Calu3 (cell line): ENCODE measurements at regions of chr18 and their contacts with region 1.

Region 1: GRCh38 chr18:6521795-6522418 is 107.2 kb upstream of the L3MBTL4 start:
- DNase-seq: peak; percentile 66
- H3K4me3 Mint-ChIP-seq: no peak overlapping the region
- H3K27ac Mint-ChIP-seq: no peak overlapping the region
- H3K4me1 Mint-ChIP-seq: no peaks in the 10 kb centered on the region
- H3K27me3 Mint-ChIP-seq: peaks cover 31% of the 10 kb centered on the region
- CTCF ChIP-seq: peak; percentile 86

Region 2: DNA sequence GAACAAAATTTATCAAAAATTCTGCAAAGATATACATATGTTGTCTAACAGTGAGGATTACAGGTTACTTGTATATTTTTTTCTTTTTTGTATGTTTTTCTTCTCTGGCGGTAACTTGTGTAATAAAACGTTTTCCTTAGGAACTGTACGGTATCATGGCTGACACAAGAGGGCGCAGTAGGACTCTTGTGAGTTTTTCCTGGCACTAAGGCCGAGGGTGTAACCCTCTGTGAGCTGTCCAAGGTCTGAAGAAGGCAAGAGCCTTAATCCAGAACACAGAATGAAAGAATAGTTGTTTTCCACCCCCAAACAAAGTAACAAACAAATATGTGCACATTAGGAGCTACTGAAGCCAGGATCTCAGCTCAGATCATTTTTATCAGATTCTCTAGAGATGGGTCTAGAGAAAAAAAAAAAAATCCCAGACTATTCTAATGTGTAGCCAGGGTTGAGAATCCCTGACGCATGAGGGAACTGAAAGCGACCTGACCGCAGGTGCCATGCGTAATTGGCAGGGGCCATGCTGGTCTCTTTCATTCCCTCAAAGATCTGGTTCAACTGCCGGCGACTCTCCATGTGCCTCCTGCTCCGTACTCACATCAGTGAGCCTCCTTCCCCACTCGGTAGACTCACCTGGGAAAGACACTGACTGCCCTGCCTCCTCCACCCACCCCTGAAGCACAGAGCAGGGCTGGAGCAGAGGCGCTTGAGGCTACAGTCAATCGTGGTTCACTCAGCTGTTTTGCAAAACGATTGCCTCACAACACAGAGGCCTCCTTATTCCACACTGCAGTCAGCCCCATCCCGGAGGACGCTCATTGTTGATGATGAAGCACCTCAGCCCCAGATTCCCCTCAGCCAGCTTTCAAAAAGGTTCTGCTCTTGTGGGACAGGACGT is 653.4 kb before region 1 on chr18:
- CTCF ChIA-PET with region 1: interaction called, 7 read pairs
- intact Hi-C with region 1: loop called (anchors 1 kb)
- DNase-seq: peak; percentile 61
- H3K4me3 Mint-ChIP-seq: no peak overlapping the region
- H3K27ac Mint-ChIP-seq: no peak overlapping the region
- H3K4me1 Mint-ChIP-seq: no peaks in the 10 kb centered on the region
- H3K27me3 Mint-ChIP-seq: peaks cover 17% of the 10 kb centered on the region
- CTCF ChIP-seq: peak; percentile 46

Region 3: DNA sequence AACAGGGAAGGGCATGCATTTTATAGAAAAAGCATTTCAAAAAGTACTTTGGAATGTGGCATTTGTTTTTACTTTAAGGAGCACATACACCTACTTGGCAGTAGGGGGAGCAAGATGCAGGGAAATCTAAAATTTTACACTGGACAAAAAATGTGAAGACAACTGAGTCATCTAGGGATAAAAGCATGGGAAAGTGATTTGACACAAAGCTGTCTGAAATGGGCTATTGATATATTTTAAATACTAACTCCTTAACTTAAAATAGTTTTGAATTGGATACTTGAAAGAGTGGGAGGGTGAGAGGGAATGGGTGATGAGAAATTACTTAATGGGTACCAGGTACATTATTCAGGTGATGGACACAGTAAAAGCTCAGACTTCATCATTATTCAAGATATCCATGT is 642.4 kb before region 1 on chr18:
- CTCF ChIA-PET with region 1: no interaction called
- intact Hi-C with region 1: loop called (anchors 1 kb)
- DNase-seq: no peak
- H3K4me3 Mint-ChIP-seq: no peak overlapping the region
- H3K27ac Mint-ChIP-seq: no peak overlapping the region
- H3K4me1 Mint-ChIP-seq: no peaks in the 10 kb centered on the region
- H3K27me3 Mint-ChIP-seq: peaks cover 18% of the 10 kb centered on the region
- CTCF ChIP-seq: peak; percentile 68

Region 4: DNA sequence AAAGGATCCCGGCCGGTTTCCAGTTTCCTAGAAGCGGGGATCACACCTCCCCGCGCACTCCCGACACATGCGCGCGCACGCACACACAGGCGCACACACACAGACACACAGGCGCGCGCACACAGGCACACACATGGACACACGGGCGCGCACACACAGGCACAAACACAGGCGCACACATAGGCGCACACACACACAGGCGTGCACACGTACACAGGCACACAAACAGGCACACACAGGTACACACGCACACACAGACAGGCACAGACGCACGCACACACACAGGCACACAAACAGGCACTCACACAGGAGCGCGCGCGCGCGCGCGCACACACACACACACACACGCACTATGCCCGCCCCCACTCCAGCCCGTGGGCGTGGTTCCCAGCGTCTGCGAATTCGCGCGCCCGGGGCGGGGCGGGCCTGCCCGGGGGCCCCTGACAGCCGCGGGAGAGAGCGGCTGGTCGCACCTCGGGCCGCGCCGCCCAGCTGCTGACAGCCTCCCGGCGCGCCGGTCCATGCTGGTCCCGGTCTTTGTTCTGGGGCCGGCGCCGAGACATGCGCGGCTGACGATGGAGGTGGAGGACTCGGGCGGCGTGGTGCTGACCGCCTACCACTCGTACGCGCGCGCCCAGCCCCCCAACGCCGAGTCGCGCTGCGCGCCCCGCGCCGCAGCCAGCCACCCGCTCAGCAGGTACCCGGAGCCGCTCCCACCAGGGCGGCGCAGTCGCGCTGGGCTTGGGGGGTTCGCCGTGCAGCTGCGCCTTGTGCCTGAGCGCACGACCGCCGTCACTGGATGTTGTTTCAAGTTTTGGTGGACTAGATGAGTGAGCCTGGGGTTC is 207.6 kb after region 1 on chr18 and contains the start of gene ARHGAP28:
- CTCF ChIA-PET with region 1: no interaction called
- intact Hi-C with region 1: no loop called
- DNase-seq: peak; percentile 54
- H3K4me3 Mint-ChIP-seq: peak within 1 kb of the TSS; percentile 80
- H3K27ac Mint-ChIP-seq: no peak within 1 kb of the TSS
- H3K4me1 Mint-ChIP-seq: peaks cover 7% of the 10 kb centered on the region
- H3K27me3 Mint-ChIP-seq: peaks cover 63% of the 10 kb centered on the region
- CTCF ChIP-seq: no peak
- total RNA-seq, gene ARHGAP28: not detected in 2 replicates